B cell (primary cell): ENCODE measurements at regions of chr1 and their contacts with region 1.

Region 1: GRCh38 chr1:7961216-7962015 is at the start of gene PARK7:
- DNase-seq: peak; percentile 100
- ATAC-seq: peak; percentile 97
- H3K4me3 ChIP-seq: peak within 1 kb of the TSS; percentile 48 to 90 (median 81)
- H3K4me3 Mint-ChIP-seq: peak within 1 kb of the TSS; percentile 97
- H3K27ac ChIP-seq: peak within 1 kb of the TSS; percentile 88 to 99
- H3K27ac Mint-ChIP-seq: peak within 1 kb of the TSS; percentile 98
- H3K4me1 ChIP-seq: peaks cover 19 to 23% of the 10 kb centered on the region in 2 donors
- H3K4me1 Mint-ChIP-seq: peaks cover 43% of the 10 kb centered on the region
- H3K27me3 ChIP-seq: no peaks in the 10 kb centered on the region
- H3K27me3 Mint-ChIP-seq: no peaks in the 10 kb centered on the region
- CTCF ChIP-seq: peak; percentile 58
- total RNA-seq, gene PARK7: 116 and 118 TPM in 2 replicates

Region 2: DNA sequence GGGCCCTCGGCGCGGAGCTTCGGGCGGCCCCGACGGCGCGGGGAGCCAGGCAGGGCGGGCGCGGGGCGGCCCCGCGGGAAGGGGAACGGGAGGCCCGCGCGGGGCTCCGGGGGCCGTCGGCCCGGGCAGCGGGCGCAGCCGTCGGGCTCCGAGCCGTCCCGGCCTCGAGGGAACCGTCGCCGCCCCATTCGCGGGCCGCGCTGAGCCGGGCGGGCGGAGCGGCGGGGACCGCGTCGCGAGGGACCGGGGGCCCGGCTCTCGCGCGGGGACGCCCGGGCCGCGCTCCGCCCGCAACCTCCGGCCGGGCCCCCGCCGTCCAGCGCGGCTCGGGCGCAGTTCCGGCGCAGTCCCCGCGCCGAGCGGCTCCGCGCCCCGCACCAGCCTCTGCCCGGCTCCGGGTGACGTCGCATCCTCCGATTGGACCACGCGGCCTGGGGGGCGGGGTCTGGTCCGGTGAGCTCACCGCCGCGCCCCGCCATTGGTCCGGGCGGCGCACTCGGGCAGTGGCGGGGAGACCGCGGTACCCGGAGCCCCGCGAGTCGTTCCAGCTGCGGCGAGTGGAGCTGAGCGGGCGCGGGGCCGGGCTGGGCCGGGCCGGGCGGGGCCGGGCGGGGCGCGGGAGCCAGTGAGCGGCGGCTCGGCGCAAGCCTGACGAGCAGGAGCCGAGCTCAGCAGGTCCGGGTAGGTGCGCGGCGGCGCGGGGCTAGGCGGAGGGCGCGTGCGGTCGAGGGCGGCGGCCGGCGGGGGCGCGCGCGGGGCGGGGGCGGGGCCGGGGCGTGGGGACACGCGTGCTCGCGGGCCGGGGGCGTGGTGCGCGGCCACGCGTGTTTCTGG is 257.0 kb before region 1 on chr1:
- CTCF ChIA-PET with region 1: no interaction called
- POLR2A ChIA-PET with region 1: no interaction called
- intact Hi-C with region 1: loop called (anchors 5 kb)
- DNase-seq: peak; percentile 95
- ATAC-seq: peak; percentile 98
- H3K4me3 ChIP-seq: peak overlapping the region in 4 of 5 experiments; percentile 49 to 67 (median 62)
- H3K4me3 Mint-ChIP-seq: peak overlapping the region; percentile 88
- H3K27ac ChIP-seq: no peak overlapping the region
- H3K27ac Mint-ChIP-seq: peak overlapping the region; percentile 88
- H3K4me1 ChIP-seq: peaks cover 6 to 15% of the 10 kb centered on the region in 2 donors
- H3K4me1 Mint-ChIP-seq: peaks cover 14% of the 10 kb centered on the region
- H3K27me3 ChIP-seq: peaks cover 0 to 15% (median 7%) of the 10 kb centered on the region in 4 experiments
- H3K27me3 Mint-ChIP-seq: peaks cover 7% of the 10 kb centered on the region
- CTCF ChIP-seq: no peak

Region 3: GRCh38 chr1:7770997-7771822 is 190.2 kb before region 1 on chr1 and contains the start of gene VAMP3:
- CTCF ChIA-PET with region 1: no interaction called
- POLR2A ChIA-PET with region 1: no interaction called
- intact Hi-C with region 1: loop called (anchors 5 kb)
- DNase-seq: peak; percentile 86
- ATAC-seq: peak; percentile 96
- H3K4me3 ChIP-seq: peak within 1 kb of the TSS; percentile 70 to 86 (median 77)
- H3K4me3 Mint-ChIP-seq: peak within 1 kb of the TSS; percentile 89
- H3K27ac ChIP-seq: peak within 1 kb of the TSS; percentile 59 to 86
- H3K27ac Mint-ChIP-seq: peak within 1 kb of the TSS; percentile 88
- H3K4me1 ChIP-seq: peaks cover 12 to 15% of the 10 kb centered on the region in 2 donors
- H3K4me1 Mint-ChIP-seq: peaks cover 28% of the 10 kb centered on the region
- H3K27me3 ChIP-seq: no peaks in the 10 kb centered on the region
- H3K27me3 Mint-ChIP-seq: no peaks in the 10 kb centered on the region
- CTCF ChIP-seq: no peak
- total RNA-seq, gene VAMP3: 48.6 and 49.6 TPM in 2 replicates

Region 4: DNA sequence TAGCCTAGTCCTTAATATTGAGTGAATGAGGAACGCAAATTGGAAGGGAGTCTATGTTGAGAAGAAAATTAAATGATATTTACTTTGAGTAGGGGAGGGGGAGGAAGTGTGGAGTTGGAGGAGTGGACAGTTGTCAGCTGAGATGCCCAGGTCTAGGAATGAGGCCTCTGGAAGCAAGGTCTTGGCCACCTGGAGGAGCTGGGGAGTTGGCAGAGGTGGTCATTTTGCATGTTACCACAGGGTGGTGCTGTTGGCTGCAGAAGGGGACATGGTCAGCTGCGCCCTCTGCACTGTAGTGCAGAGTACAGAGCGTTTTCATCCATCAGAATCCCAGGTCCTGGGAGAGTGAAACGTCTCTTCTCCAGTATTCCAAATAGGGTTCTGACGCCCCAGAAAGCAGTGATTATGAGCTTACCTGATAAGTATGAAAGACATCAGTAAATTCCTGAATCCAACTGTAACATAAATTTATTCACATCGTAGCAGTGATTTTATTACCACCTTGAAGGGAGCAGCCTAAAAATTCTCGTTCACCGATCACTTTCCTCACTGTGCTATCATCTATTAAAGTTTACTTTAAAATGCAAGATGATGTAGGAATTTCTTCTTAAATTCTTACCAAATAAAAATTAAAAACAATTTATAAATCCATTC is 13.9 kb after region 1 on chr1:
- CTCF ChIA-PET with region 1: interaction called, 13 read pairs
- POLR2A ChIA-PET with region 1: interaction called, 5 read pairs
- intact Hi-C with region 1: no loop called
- DNase-seq: peak; percentile 46
- ATAC-seq: peak; percentile 43
- H3K4me3 ChIP-seq: no peak overlapping the region
- H3K4me3 Mint-ChIP-seq: no peak overlapping the region
- H3K27ac ChIP-seq: no peak overlapping the region
- H3K27ac Mint-ChIP-seq: no peak overlapping the region
- H3K4me1 ChIP-seq: no peaks in the 10 kb centered on the region
- H3K4me1 Mint-ChIP-seq: no peaks in the 10 kb centered on the region
- H3K27me3 ChIP-seq: no peaks in the 10 kb centered on the region
- H3K27me3 Mint-ChIP-seq: no peaks in the 10 kb centered on the region
- CTCF ChIP-seq: peak; percentile 68

Region 5: GRCh38 chr1:8061210-8061609 is 99.8 kb after region 1 on chr1:
- CTCF ChIA-PET with region 1: no interaction called
- POLR2A ChIA-PET with region 1: no interaction called
- intact Hi-C with region 1: no loop called
- DNase-seq: no peak
- ATAC-seq: no peak
- H3K4me3 ChIP-seq: no peak overlapping the region
- H3K4me3 Mint-ChIP-seq: no peak overlapping the region
- H3K27ac ChIP-seq: no peak overlapping the region
- H3K27ac Mint-ChIP-seq: no peak overlapping the region
- H3K4me1 ChIP-seq: no peaks in the 10 kb centered on the region
- H3K4me1 Mint-ChIP-seq: no peaks in the 10 kb centered on the region
- H3K27me3 ChIP-seq: peaks cover 0 to 4% (median 1%) of the 10 kb centered on the region in 4 experiments
- H3K27me3 Mint-ChIP-seq: peaks cover 34% of the 10 kb centered on the region
- CTCF ChIP-seq: no peak

Region 6: DNA sequence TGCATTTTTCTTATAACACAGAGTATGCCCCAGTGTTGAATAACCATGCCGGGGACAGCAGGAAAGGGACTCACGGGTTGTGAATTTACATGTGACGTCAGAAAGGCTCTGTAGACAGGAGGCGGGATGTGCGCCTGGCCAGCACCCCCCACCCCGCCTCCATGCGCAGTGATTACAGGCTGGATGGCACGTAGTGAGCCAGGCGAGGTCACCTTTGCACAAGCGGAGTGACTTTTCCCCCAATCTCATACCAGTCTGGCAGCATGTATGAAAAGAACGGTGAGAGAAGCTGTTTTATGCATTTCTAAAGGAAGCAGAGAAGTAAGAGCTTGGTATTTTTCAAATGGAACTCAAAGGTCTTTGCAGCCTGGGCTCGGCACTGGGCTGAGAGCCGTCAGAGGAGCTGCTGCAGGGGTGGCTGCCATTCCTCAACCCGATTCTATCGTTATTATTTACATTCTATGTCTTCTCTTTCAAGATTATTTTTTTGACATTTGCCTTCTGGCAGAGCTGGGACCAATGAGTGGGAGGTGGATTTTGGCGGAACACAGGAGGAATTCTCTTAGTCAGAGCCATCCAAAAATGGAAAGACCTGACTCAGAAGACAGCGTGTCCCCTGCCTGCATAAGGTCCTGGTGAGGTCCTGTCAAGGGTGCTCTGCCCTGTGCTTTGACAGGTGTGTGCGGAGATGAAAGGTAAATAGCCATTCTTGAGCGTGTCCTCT is 240.9 kb after region 1 on chr1:
- CTCF ChIA-PET with region 1: no interaction called
- POLR2A ChIA-PET with region 1: no interaction called
- intact Hi-C with region 1: no loop called
- DNase-seq: no peak
- ATAC-seq: no peak
- H3K4me3 ChIP-seq: no peak overlapping the region
- H3K4me3 Mint-ChIP-seq: no peak overlapping the region
- H3K27ac ChIP-seq: no peak overlapping the region
- H3K27ac Mint-ChIP-seq: no peak overlapping the region
- H3K4me1 ChIP-seq: no peaks in the 10 kb centered on the region
- H3K4me1 Mint-ChIP-seq: no peaks in the 10 kb centered on the region
- H3K27me3 ChIP-seq: no peaks in the 10 kb centered on the region
- H3K27me3 Mint-ChIP-seq: peaks cover 10% of the 10 kb centered on the region
- CTCF ChIP-seq: no peak